GM18951 (cell line): ENCODE measurements at regions of chr15 and their contacts with region 1.

Region 1: GRCh38 chr15:81265944-81266775 is 57.8 kb downstream of the STARD5 start:
- POLR2A ChIP-seq: no peak

Region 2: GRCh38 chr15:81111510-81112470 is 154.4 kb before region 1 on chr15:
- in situ Hi-C with region 1: loop called (anchors 10 kb)
- POLR2A ChIP-seq: no peak

Region 3: GRCh38 chr15:81398959-81399477 is 132.9 kb after region 1 on chr15:
- in situ Hi-C with region 1: loop called (anchors 5 kb)
- POLR2A ChIP-seq: no peak